Gastrocnemius medialis (tissue), 4 donors: ENCODE measurements at regions of chr4 and their contacts with region 1.

Region 1: DNA sequence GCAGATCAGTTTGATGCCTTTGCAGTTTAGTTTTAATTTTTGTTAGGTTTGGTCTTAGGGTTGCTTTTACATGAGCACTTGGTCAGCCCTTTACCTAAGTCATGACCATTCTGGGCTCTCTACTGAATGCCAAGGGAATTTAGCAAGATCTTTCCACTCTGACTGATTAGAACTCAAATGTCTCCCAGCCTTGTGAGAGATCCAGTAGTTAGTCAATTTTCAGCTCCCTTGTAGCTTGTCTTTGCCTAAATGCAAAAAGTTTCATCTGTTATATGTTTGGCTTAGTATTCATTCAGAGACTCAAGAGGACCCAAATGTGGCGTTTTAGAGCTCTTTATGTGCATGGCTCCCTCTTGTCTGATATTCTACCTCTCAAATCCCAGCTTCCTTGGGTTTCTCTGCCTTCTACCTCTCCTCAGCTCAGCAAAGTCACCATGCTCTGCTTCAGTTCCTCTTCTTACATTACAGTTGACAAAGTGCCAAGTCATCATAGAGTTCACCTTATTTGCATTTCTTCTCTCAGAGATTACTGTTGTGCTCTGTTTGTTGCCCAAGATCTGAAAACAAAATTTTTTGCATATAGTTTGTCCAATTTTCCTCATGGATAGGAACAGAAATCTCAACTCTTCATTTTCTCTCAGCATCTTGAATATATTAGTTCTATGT is 17.5 kb upstream of the JAKMIP1 start:
- DNase-seq: no peak
- ATAC-seq: no peak
- H3K4me3 ChIP-seq: no peak overlapping the region
- H3K27ac ChIP-seq: no peak overlapping the region
- H3K4me1 ChIP-seq: no peaks in the 10 kb centered on the region
- H3K27me3 ChIP-seq: peaks cover 15 to 24% (median 21%) of the 10 kb centered on the region in 3 donors
- CTCF ChIP-seq: no peak
- POLR2A ChIP-seq: no peak

Region 2: DNA sequence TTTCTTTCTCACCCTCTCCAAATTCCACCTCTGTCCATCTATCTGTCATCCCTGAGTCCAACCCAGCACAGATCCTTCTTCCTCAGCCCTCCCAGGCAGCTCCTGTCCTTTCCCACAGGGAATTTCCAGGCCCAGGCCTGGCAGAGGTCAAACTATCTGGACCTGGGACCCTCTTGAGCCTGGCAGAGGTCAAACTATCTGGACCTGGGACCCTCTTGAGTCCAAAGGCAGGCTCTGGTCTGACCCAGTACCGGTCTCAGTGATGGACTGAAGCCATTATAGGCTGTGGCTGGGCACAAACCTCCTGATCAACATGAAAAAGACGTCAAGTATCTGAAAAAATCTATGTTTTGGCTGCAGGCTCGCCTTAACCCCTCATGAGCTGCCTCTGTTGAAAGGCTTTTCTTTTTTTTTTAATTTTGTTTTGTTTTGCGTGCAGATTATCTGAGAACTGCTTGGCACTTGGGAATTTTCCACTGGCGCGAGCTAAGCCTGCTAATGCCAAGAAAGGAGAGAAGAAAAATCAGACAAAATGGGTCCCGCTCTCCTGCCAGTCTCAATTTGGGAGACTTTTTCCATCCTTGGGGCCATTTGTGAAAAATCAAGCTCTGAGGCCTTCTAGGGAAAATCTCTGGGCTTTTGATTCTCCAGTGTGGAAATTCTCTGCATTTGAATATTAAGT is 1327.1 kb before region 1 on chr4:
- in situ Hi-C with region 1: no loop called
- intact Hi-C with region 1: loop called (anchors 10 kb)
- DNase-seq: no peak
- ATAC-seq: no peak
- H3K4me3 ChIP-seq: no peak overlapping the region
- H3K27ac ChIP-seq: no peak overlapping the region
- H3K4me1 ChIP-seq: no peaks in the 10 kb centered on the region
- H3K27me3 ChIP-seq: peaks cover 0 to 3% (median 0%) of the 10 kb centered on the region in 3 donors
- CTCF ChIP-seq: no peak
- POLR2A ChIP-seq: no peak

Region 3: GRCh38 chr4:6269616-6270511 is 52.0 kb after region 1 on chr4 and contains the start of gene WFS1:
- in situ Hi-C with region 1: no loop called
- intact Hi-C with region 1: no loop called
- DNase-seq: peak; percentile 98 to 99
- ATAC-seq: peak; percentile 93 to 95
- H3K4me3 ChIP-seq: peak within 1 kb of the TSS; percentile 72 to 91 (median 84)
- H3K27ac ChIP-seq: peak within 1 kb of the TSS; percentile 60 to 82 (median 75)
- H3K4me1 ChIP-seq: peaks cover 28 to 35% of the 10 kb centered on the region in 2 donors
- H3K27me3 ChIP-seq: no peaks in the 10 kb centered on the region
- CTCF ChIP-seq: no peak
- POLR2A ChIP-seq: peak; percentile 64 to 73
- total RNA-seq, gene WFS1: 13.6 to 23.7 (median 15.6) TPM